Activated naive CD4-positive, alpha-beta T cell treated with anti-CD3 and anti-CD28 coated beads, Interleukin-2, amount 10 ng/mL, durations not matched to agents 7 days and 5 days (primary cell): ENCODE measurements at regions of chr20 and their contacts with region 1.

Region 1: DNA sequence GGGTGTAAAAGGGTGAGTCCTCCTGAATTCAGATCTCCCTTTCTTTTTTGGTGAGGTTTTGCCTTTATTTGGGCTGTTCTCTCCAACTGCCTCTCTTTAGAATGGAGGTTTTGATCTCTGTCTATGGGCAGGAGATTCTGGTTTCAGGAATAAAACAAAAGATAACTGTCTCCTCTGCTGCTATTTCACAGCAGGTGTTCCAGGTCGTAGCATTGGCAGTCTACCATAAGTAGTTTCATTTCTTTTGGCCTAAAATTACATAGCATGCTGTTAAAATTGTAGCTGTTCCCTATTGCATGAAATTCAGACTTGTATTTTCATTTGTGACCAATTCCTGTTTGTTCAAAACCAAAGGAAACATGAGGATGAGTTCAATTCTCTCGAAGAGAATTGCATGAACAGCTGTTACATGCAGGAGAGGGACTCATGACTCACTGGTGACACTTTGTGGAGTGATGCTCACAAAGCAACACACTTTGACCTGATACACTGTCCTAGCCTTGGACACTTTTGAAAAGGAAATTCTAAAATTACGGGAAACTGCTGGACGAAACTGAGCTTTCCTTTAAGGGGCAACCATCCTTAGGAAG is 76.8 kb upstream of the SIRPG start:
- DNase-seq: peak; percentile 57
- H3K4me3 Mint-ChIP-seq: no peak overlapping the region
- H3K27ac Mint-ChIP-seq: no peak overlapping the region
- H3K4me1 Mint-ChIP-seq: peaks cover 41% of the 10 kb centered on the region
- H3K27me3 Mint-ChIP-seq: peaks cover 16% of the 10 kb centered on the region

Region 2: DNA sequence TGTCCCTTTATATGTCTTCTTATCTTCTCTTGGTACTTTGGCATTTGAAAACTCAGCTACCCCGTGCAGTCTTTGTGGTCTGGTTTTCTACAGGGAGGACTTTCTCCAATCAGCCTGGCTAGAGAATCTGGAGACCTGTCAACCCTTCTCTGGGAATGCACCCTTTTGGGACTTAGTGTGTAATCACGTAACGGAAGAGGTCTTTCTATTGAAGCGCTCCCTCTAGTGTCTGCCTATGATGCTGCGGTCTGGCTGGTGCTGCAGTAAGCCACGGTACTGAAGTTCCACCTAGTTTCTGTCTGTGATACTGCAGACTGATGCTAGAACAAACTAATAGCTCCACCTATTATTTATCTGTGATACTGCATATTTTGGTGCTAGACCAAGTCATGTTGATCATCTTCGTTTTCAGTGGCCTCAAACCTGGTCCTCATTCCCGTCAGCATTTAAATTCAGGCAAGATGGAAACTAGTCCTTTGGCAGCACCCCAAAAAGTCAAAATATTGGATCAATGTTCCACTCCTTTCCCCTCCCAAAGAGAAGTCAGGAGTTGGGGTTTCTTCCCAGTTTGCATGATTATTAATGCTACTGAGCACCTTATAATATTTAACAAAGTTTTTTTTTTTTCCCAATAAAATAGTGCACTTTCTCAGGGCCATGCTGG is 230.7 kb before region 1 on chr20:
- CTCF ChIA-PET with region 1: interaction called, 41 read pairs
- DNase-seq: peak; percentile 85
- H3K4me3 Mint-ChIP-seq: no peak overlapping the region
- H3K27ac Mint-ChIP-seq: no peak overlapping the region
- H3K4me1 Mint-ChIP-seq: peaks cover 7% of the 10 kb centered on the region
- H3K27me3 Mint-ChIP-seq: peaks cover 57% of the 10 kb centered on the region

Region 3: GRCh38 chr20:1533059-1533458 is 201.3 kb before region 1 on chr20:
- CTCF ChIA-PET with region 1: interaction called, 24 read pairs
- DNase-seq: no peak
- H3K4me3 Mint-ChIP-seq: no peak overlapping the region
- H3K27ac Mint-ChIP-seq: no peak overlapping the region
- H3K4me1 Mint-ChIP-seq: peaks cover 4% of the 10 kb centered on the region
- H3K27me3 Mint-ChIP-seq: peaks cover 10% of the 10 kb centered on the region

Region 4: GRCh38 chr20:1588533-1589460 is 145.6 kb before region 1 on chr20:
- CTCF ChIA-PET with region 1: interaction called, 16 read pairs
- DNase-seq: peak; percentile 53
- H3K4me3 Mint-ChIP-seq: no peak overlapping the region
- H3K27ac Mint-ChIP-seq: peak overlapping the region; percentile 86
- H3K4me1 Mint-ChIP-seq: peaks cover 25% of the 10 kb centered on the region
- H3K27me3 Mint-ChIP-seq: no peaks in the 10 kb centered on the region

Region 5: GRCh38 chr20:1685304-1686052 is 48.9 kb before region 1 on chr20:
- CTCF ChIA-PET with region 1: interaction called, 18 read pairs
- DNase-seq: peak; percentile 47
- H3K4me3 Mint-ChIP-seq: peak overlapping the region; percentile 47
- H3K27ac Mint-ChIP-seq: peak overlapping the region; percentile 88
- H3K4me1 Mint-ChIP-seq: peaks cover 52% of the 10 kb centered on the region
- H3K27me3 Mint-ChIP-seq: peaks cover under 1% of the 10 kb centered on the region

Region 6: DNA sequence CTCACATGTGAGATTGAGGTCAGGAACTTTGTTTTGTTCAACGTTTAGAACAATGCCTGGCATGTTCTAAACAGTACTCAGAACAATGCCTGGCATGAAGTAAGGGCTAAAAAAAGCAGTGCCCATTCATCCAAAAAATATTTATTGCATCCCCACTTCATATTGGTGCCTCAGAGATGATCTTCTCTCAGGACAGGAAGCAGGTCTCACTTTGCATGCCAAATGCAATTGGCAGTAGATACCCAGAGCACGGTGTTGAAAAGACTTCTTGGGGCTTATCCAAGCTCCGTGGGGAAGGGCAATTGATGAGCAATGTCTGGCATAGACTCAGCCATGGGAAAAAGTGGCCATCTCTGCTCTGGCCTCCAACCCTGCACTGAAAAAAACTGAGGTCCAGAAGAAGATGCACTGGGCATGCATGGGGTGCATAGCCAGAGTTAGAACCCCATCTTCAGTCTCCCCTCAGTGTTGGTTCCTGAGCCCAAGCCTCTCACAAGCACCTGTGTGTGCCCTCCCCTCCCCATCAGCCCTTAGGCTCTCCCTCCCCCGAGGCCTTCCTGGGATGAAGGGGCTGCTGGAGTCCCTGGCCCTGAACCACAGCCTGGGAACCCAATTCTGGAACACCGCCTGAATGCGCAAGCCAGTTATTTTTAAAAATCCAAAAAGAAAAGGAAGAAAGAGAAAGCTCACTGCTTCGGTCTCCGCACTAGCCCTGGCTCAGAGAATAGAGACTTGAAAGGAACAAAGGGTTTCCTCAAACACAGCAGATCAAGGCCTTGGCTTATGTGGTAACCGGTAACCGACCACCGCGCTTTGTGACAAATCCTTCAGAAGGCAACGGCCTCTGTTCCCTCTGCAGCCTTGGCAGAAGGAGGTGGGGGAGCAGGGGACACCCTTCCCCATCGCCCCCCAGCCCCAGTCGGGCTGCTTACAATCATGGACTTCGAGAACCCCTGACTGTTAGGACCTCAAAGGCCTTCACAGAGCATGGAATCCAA is 82.3 kb after region 1 on chr20:
- CTCF ChIA-PET with region 1: no interaction called
- DNase-seq: peak; percentile 44
- H3K4me3 Mint-ChIP-seq: no peak overlapping the region
- H3K27ac Mint-ChIP-seq: no peak overlapping the region
- H3K4me1 Mint-ChIP-seq: peaks cover 12% of the 10 kb centered on the region
- H3K27me3 Mint-ChIP-seq: peaks cover 79% of the 10 kb centered on the region